Sigmoid colon (tissue), 7 donors: ENCODE measurements at regions of chr9 and their contacts with region 1.

Region 1: GRCh38 chr9:6305954-6306563 is 22.1 kb upstream of the TPD52L3 start:
- DNase-seq: no peak
- H3K4me3 ChIP-seq: no peak overlapping the region
- H3K27ac ChIP-seq: no peak overlapping the region
- H3K4me1 ChIP-seq: no peaks in the 10 kb centered on the region
- H3K27me3 ChIP-seq: no peaks in the 10 kb centered on the region
- CTCF ChIP-seq: peak in 3 of 4 experiments; percentile 50 to 52 (median 51)
- EP300 ChIP-seq: no peak
- POLR2A ChIP-seq: no peak

Region 2: GRCh38 chr9:5799314-5799713 is 506.7 kb before region 1 on chr9:
- intact Hi-C with region 1: no loop called
- DNase-seq: no peak
- H3K4me3 ChIP-seq: peak overlapping the region in 3 of 4 donors; percentile 27 to 42 (median 40)
- H3K27ac ChIP-seq: peak overlapping the region in 1 of 4 donors; percentile 25
- H3K4me1 ChIP-seq: peaks cover 0 to 20% (median 7%) of the 10 kb centered on the region in 4 donors
- H3K27me3 ChIP-seq: no peaks in the 10 kb centered on the region
- CTCF ChIP-seq: peak in 3 of 4 experiments; percentile 15 to 48 (median 24)
- EP300 ChIP-seq: no peak
- POLR2A ChIP-seq: no peak

Region 3: GRCh38 chr9:5886114-5886939 is 419.7 kb before region 1 on chr9:
- intact Hi-C with region 1: loop called (anchors 10 kb)
- DNase-seq: peak; percentile 70
- H3K4me3 ChIP-seq: no peak overlapping the region
- H3K27ac ChIP-seq: no peak overlapping the region
- H3K4me1 ChIP-seq: no peaks in the 10 kb centered on the region
- H3K27me3 ChIP-seq: no peaks in the 10 kb centered on the region
- CTCF ChIP-seq: peak; percentile 35 to 89 (median 58)
- EP300 ChIP-seq: no peak
- POLR2A ChIP-seq: no peak

Region 4: DNA sequence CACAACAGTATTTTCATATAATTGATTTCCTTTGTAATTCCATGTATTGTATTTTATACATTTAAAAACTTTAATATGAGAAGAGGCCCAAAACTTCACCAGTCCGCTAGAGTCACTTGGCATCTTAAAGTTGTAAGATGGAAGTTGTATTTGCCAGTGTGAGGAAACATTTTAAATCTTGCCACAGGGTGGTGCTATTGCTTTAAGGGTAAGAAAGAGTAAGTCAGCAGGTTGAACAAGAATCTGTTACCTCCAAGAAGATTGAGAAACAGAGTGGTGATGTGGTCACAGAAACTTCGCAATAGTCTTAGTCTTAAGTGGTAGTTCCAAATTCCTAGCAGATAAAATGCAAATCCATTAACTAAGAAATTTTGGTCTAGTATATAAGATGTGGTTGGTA is 250.8 kb before region 1 on chr9:
- intact Hi-C with region 1: loop called (anchors 1 kb)
- DNase-seq: no peak
- H3K4me3 ChIP-seq: no peak overlapping the region
- H3K27ac ChIP-seq: no peak overlapping the region
- H3K4me1 ChIP-seq: no peaks in the 10 kb centered on the region
- H3K27me3 ChIP-seq: no peaks in the 10 kb centered on the region
- CTCF ChIP-seq: peak; percentile 21 to 45 (median 28)
- EP300 ChIP-seq: no peak
- POLR2A ChIP-seq: no peak

Region 5: DNA sequence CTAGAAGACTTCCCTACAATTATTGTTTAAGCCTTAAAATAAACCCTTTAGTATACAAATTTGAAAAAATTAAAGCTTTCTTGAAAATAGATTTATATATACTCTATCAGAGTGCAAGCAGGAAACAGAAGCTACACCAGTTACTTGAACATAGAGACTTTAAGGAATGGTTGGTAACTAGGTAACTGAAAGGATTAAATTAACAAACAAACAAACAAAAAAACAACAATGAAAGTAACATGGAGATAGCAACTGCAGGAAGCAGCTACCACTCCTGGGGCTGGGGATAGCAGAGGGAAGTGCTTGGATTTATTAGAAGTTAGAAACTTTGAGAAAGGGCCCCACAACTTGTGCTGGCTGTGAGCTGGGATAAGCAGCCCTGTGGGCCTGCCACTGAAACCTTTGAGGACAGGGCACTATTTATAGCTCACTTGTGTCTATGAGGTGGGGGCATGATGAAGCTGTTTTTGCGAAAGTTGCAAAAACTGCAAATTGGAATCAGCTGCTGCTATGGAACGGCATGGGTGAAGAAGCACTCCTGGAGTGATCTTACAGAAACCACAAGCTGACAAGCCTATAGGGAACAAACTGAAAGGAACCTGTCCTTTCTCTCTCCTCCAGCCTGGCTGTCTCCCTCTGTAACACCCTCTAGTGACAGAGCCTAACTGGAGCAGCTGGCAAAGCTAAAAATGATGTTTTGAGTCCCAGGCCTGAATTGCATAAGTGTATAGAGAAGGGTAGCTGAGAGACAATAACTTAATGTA is 199.3 kb before region 1 on chr9:
- intact Hi-C with region 1: no loop called
- DNase-seq: no peak
- H3K4me3 ChIP-seq: no peak overlapping the region
- H3K27ac ChIP-seq: peak overlapping the region in 2 of 4 donors; percentile 20 to 31
- H3K4me1 ChIP-seq: peaks cover 0 to 10% (median 3%) of the 10 kb centered on the region in 4 donors
- H3K27me3 ChIP-seq: no peaks in the 10 kb centered on the region
- CTCF ChIP-seq: no peak
- EP300 ChIP-seq: no peak
- POLR2A ChIP-seq: no peak

Region 6: DNA sequence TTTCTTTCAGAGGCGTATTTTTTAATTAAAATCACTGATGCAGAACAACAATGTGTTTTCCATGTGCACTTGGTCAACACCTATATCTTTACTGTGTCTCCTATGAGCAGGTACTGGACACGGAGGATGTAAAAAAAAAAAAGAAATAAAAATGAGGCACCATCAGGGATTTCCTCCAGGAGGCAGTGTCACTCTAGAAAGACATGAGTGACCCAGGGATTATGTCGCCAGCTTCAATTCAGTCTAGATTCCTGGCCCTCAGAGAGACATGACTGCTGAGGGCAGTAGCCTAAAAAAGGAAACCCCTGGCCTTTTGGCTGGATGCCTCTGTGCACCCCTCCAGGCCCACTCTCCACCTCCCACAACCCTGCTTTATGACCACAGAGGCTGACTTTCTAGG is 108.7 kb before region 1 on chr9:
- intact Hi-C with region 1: loop called (anchors 2 kb)
- DNase-seq: no peak
- H3K4me3 ChIP-seq: no peak overlapping the region
- H3K27ac ChIP-seq: peak overlapping the region in 1 of 4 donors; percentile 5
- H3K4me1 ChIP-seq: no peaks in the 10 kb centered on the region
- H3K27me3 ChIP-seq: no peaks in the 10 kb centered on the region
- CTCF ChIP-seq: peak; percentile 18 to 60 (median 30)
- EP300 ChIP-seq: no peak
- POLR2A ChIP-seq: no peak